Activated CD4-positive, alpha-beta T cell treated with anti-CD3 and anti-CD28 coated beads, Interleukin-2, amount 10 ng/mL, durations not matched to agents 7 days and 5 days (primary cell): ENCODE measurements at regions of chr1 and their contacts with region 1.

Region 1: GRCh38 chr1:11735854-11736745 is at the start of gene AGTRAP:
- DNase-seq: peak; percentile 91
- H3K4me3 Mint-ChIP-seq: peak within 1 kb of the TSS; percentile 95
- H3K27ac Mint-ChIP-seq: peak within 1 kb of the TSS; percentile 87
- H3K4me1 Mint-ChIP-seq: peaks cover 72% of the 10 kb centered on the region
- H3K27me3 Mint-ChIP-seq: no peaks in the 10 kb centered on the region
- total RNA-seq, gene AGTRAP: 41.3 to 42.7 TPM

Region 2: DNA sequence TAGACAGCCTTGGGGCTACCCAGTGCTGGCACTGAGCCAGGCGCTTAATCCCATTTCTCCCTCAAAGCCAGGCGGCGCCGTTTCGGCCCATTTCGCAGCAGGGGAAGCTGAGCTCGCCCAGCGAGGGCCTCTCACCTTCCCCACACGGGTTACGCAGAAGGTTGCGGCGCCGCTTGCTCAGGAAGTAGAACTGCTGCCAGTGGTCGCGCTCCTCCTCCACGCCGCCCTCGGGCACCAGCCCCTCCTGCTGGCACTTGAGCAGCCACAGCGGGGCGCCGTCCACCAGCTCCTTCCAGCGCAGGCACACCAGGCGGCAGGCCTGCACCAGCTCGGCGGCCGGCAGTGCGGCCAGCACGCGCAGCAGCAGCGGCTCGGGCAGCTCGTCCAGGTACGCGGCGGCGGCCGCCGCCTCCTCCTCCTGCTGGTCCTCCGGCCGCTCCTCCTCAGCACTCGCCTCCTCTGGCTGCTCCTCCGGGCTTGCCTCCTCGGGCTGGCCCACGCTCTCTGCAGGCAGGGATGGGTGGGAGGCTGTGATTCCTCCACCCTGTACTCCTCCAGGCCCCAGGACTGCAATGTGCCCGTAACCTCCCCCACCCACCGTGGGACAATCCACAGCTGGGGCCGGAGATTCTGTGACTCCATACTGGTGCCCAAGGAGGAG is 85.6 kb before region 1 on chr1:
- CTCF ChIA-PET with region 1: interaction called, 12 read pairs
- POLR2A ChIA-PET with region 1: no interaction called
- DNase-seq: peak; percentile 87
- H3K4me3 Mint-ChIP-seq: peak overlapping the region; percentile 60
- H3K27ac Mint-ChIP-seq: peak overlapping the region; percentile 13
- H3K4me1 Mint-ChIP-seq: peaks cover 25% of the 10 kb centered on the region
- H3K27me3 Mint-ChIP-seq: peaks cover 14% of the 10 kb centered on the region